ENCODE measurements at regions of chr14 and their contacts with region 1.

Region 1: GRCh38 chr14:105527661-105528581 is 1.5 kb downstream of the TMEM121 start:
- DNase-seq: peak; percentile 81 to 95 (median 93)
- ATAC-seq: peak; percentile 71 to 72
- H3K4me3 ChIP-seq: peak overlapping the region; percentile 52
- H3K27ac ChIP-seq: no peak overlapping the region
- H3K4me1 ChIP-seq: no peaks in the 10 kb centered on the region
- H3K27me3 ChIP-seq: no peaks in the 10 kb centered on the region

Region 2: GRCh38 chr14:105369653-105370040 is 158.3 kb before region 1 on chr14:
- intact Hi-C with region 1: loop called in 2 of 4 experiments (anchors 2 to 10 kb)
- DNase-seq: peak in 1 of 3 donors; percentile 61
- ATAC-seq: no peak
- H3K4me3 ChIP-seq: no peak overlapping the region
- H3K27ac ChIP-seq: no peak overlapping the region
- H3K4me1 ChIP-seq: no peaks in the 10 kb centered on the region
- H3K27me3 ChIP-seq: no peaks in the 10 kb centered on the region

Measured in right cardiac atrium (tissue), 5 donors.